HCT116 (cell line): ENCODE measurements at regions of chr1 and their contacts with region 1.

Region 1: GRCh38 chr1:28088168-28088961 is at the start of gene EYA3:
- DNase-seq: peak; percentile 96
- ATAC-seq: peak; percentile 94
- H3K4me3 ChIP-seq: peak within 1 kb of the TSS; percentile 87 to 97
- H3K27ac ChIP-seq: peak within 1 kb of the TSS; percentile 71
- H3K4me1 ChIP-seq: peaks cover 4 to 18% of the 10 kb centered on the region in 2 experiments; a peak in 3 of 4 replicates
- H3K27me3 ChIP-seq: no peaks in the 10 kb centered on the region
- CTCF ChIP-seq: no peak
- POLR2A ChIP-seq: peak; percentile 90
- RAD21 ChIP-seq: no peak
- total RNA-seq, gene EYA3: 25.9 TPM

Region 2: DNA sequence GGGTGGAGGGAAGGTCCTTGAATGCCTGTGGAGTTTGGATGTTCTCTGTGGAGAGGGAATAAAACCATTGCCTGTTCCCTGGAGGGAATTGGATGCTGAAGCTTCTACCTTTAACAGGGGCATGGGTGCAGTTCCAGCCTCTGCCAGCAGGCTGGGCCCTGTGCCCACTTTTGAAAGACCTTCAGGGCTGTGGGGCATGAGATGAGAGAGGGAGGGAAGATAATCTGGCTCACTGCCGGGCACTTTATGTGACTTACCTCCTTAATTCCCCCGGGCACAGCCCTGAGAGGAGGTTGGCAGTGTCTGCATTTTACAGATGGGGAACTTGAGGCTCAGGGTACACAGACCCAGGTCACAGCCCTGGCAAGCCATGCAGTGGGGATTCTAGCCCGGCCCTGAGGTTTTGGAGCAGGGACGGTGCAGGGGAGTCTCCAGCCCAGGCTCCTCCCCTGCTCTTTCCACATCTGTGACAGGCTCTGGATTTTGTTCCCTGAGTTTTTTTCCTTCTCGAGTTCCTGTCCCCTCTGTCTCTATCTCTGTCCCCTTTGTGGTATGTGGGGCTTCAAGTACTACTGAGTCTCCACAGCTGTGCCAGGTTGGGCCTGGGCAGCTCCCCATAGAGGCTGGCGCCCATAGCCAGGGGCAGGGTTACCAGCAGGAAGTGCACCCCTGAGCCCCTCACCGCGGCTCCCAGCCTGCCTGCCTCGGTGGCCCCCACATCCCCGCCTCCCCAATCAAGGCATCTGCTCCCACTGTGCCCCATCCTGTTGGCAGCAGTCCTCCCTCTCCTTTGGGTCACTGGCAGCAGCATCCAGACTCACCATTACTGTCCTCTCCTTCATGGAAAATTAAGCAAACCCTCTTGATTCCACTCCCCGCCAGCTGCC is 230.1 kb before region 1 on chr1:
- CTCF ChIA-PET with region 1: interaction called, 5 read pairs
- POLR2A ChIA-PET with region 1: no interaction called
- RAD21 ChIA-PET with region 1: no interaction called
- intact Hi-C with region 1: loop called (anchors 5 kb)
- DNase-seq: peak; percentile 56
- ATAC-seq: peak; percentile 95
- H3K4me3 ChIP-seq: no peak overlapping the region
- H3K27ac ChIP-seq: no peak overlapping the region
- H3K4me1 ChIP-seq: peaks cover 0 to 9% of the 10 kb centered on the region in 2 experiments; a peak in 2 of 4 replicates
- H3K27me3 ChIP-seq: no peaks in the 10 kb centered on the region
- CTCF ChIP-seq: peak; percentile 88 to 99 (median 98)
- POLR2A ChIP-seq: no peak
- RAD21 ChIP-seq: peak; percentile 98

Region 3: DNA sequence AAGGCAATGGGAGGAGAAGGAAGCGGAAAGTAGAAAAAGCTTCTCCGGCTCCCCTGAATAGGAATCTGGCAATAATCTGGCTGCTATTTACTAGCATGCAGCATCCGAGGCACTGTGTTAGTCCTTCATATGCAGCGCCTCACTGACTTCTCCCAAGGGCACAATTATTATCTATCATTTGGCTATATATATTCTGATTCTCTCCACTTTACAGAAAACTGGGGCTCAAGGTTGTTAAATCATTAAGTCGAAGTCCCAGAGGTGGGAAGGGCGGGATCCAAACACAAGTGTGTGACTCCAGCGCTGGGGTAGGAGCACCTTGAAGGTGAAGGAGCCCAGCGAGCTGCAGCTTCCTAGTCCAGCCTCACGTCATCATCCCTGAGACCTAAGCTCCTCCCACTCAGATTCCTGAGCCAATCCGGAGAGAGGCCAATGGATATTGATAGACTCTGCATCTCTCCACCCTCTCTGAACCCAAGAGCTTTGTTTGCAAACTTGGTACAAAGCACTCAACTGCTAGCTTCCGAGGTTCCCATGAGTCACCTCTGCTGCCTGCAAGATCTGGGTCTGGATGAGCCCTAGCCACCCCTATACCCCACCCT is 16.6 kb after region 1 on chr1:
- CTCF ChIA-PET with region 1: interaction called, 16 read pairs
- POLR2A ChIA-PET with region 1: interaction called, 5 read pairs
- RAD21 ChIA-PET with region 1: no interaction called
- intact Hi-C with region 1: no loop called
- DNase-seq: peak; percentile 67
- ATAC-seq: peak; percentile 100
- H3K4me3 ChIP-seq: peak overlapping the region in 1 of 2 experiments; percentile 44; a peak in 2 of 4 replicates
- H3K27ac ChIP-seq: no peak overlapping the region
- H3K4me1 ChIP-seq: peaks cover 0 to 14% of the 10 kb centered on the region in 2 experiments; a peak in 3 of 4 replicates
- H3K27me3 ChIP-seq: no peaks in the 10 kb centered on the region
- CTCF ChIP-seq: no peak
- POLR2A ChIP-seq: peak; percentile 79
- RAD21 ChIP-seq: no peak

Region 4: GRCh38 chr1:28208818-28209441 is 120.6 kb after region 1 on chr1:
- CTCF ChIA-PET with region 1: interaction called, 103 read pairs
- POLR2A ChIA-PET with region 1: interaction called, 5 read pairs
- RAD21 ChIA-PET with region 1: interaction called, 7 to 13 read pairs
- intact Hi-C with region 1: loop called (anchors 1 kb)
- DNase-seq: peak; percentile 58
- ATAC-seq: peak; percentile 90
- H3K4me3 ChIP-seq: no peak overlapping the region
- H3K27ac ChIP-seq: no peak overlapping the region
- H3K4me1 ChIP-seq: no peaks in the 10 kb centered on the region
- H3K27me3 ChIP-seq: no peaks in the 10 kb centered on the region
- CTCF ChIP-seq: peak; percentile 66 to 89 (median 77)
- POLR2A ChIP-seq: no peak
- RAD21 ChIP-seq: peak; percentile 95

Region 5: GRCh38 chr1:28369371-28370238 is 281.2 kb after region 1 on chr1 and contains the start of gene PHACTR4:
- CTCF ChIA-PET with region 1: interaction called, 14 read pairs
- POLR2A ChIA-PET with region 1: interaction called, 3 read pairs
- RAD21 ChIA-PET with region 1: interaction called in 1 of 2 experiments, 4 read pairs
- intact Hi-C with region 1: loop called (anchors 2 kb)
- DNase-seq: peak; percentile 92
- ATAC-seq: peak; percentile 92
- H3K4me3 ChIP-seq: peak within 1 kb of the TSS; percentile 87 to 93
- H3K27ac ChIP-seq: peak within 1 kb of the TSS; percentile 92
- H3K4me1 ChIP-seq: peaks cover 52 to 76% of the 10 kb centered on the region in 2 experiments
- H3K27me3 ChIP-seq: no peaks in the 10 kb centered on the region
- CTCF ChIP-seq: no peak
- POLR2A ChIP-seq: peak; percentile 93
- RAD21 ChIP-seq: no peak
- total RNA-seq, gene PHACTR4: 36.0 TPM